H1 (cell line): ENCODE measurements at regions of chr5 and their contacts with region 1.

Region 1: GRCh38 chr5:141512390-141512910 is 23.6 kb downstream of the PCDHGC5 start:
- DNase-seq: peak; percentile 93 to 99
- H3K4me3 ChIP-seq: peak overlapping the region; percentile 61 to 83 (median 76)
- H3K27ac ChIP-seq: no peak overlapping the region
- H3K4me1 ChIP-seq: peaks cover 7 to 35% (median 19%) of the 10 kb centered on the region in 4 experiments
- H3K27me3 ChIP-seq: no peaks in the 10 kb centered on the region
- CTCF ChIP-seq: peak in 2 of 3 experiments; percentile 97 to 98; a peak in 3 of 4 replicates
- EP300 ChIP-seq: no peak; a peak in 1 of 3 replicates
- POLR2A ChIP-seq: peak in 1 of 2 experiments; percentile 60; a peak in 2 of 3 replicates
- RAD21 ChIP-seq: peak; percentile 80 to 86

Region 2: DNA sequence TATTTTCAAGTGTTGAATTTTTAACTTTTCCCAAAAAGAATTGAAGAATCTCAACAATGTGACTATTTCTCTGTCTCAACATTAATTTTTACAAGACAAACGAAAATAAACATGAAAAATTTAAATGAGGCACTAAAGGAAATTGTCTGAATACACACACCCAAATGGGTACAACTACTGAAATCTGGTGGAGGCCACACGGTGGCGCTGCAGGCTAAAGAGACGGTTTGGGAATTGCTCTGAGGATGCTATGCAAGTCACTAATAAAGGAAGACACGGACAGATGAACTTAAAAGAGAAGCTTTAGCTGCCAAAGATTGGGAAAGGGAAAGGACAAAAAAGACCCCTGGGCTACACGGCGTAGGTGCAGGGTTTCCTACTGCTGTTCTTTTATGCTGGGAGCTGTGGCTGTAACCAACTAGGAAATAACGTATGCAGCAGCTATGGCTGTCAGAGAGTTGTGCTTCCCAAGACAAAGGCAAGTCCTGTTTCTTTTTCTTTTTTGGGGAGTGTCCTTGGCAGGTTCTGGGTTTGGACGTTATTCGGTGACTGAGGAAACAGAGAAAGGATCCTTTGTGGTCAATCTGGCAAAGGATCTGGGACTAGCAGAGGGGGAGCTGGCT is 320.2 kb before region 1 on chr5 and contains the start of gene PCDHB10:
- CTCF ChIA-PET with region 1: interaction called, 15 read pairs
- POLR2A ChIA-PET with region 1: no interaction called
- DNase-seq: peak in 1 of 2 experiments; percentile 92
- H3K4me3 ChIP-seq: peak within 1 kb of the TSS; percentile 14 to 46 (median 35); a peak in 6 of 8 replicates
- H3K27ac ChIP-seq: no peak within 1 kb of the TSS
- H3K4me1 ChIP-seq: no peaks in the 10 kb centered on the region; a peak in 1 of 7 replicates
- H3K27me3 ChIP-seq: no peaks in the 10 kb centered on the region
- CTCF ChIP-seq: peak; percentile 72 to 83 (median 83)
- EP300 ChIP-seq: no peak
- POLR2A ChIP-seq: no peak
- RAD21 ChIP-seq: peak; percentile 82 to 84
- total RNA-seq, gene PCDHB10: 1.8 and 1.9 TPM in 2 replicates

Region 3: GRCh38 chr5:141369994-141370848 is 142.2 kb before region 1 on chr5 and contains the start of gene PCDHGB3:
- CTCF ChIA-PET with region 1: interaction called, 12 read pairs
- POLR2A ChIA-PET with region 1: no interaction called
- DNase-seq: no peak
- H3K4me3 ChIP-seq: no peak within 1 kb of the TSS
- H3K27ac ChIP-seq: no peak within 1 kb of the TSS
- H3K4me1 ChIP-seq: no peaks in the 10 kb centered on the region
- H3K27me3 ChIP-seq: no peaks in the 10 kb centered on the region
- CTCF ChIP-seq: peak; percentile 14 to 28 (median 24); a peak in 3 of 4 replicates
- EP300 ChIP-seq: no peak
- POLR2A ChIP-seq: no peak
- RAD21 ChIP-seq: peak; percentile 43 to 50; a peak in 3 of 4 replicates
- total RNA-seq, gene PCDHGB3: 1.3 and 1.6 TPM in 2 replicates

Region 4: DNA sequence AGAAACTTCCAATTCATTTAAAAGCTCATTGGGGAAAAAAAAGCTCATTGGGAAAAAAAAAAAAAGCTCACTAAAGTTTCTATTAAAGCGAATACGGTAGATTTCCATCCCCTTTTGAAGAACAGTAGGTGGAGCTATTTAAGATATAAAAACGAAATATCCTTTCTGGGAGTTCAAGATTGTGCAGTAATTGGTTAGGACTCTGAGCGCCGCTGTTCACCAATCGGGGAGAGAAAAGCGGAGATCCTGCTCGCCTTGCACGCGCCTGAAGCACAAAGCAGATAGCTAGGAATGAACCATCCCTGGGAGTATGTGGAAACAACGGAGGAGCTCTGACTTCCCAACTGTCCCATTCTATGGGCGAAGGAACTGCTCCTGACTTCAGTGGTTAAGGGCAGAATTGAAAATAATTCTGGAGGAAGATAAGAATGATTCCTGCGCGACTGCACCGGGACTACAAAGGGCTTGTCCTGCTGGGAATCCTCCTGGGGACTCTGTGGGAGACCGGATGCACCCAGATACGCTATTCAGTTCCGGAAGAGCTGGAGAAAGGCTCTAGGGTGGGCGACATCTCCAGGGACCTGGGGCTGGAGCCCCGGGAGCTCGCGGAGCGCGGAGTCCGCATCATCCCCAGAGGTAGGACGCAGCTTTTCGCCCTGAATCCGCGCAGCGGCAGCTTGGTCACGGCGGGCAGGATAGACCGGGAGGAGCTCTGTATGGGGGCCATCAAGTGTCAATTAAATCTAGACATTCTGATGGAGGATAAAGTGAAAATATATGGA is 81.9 kb before region 1 on chr5 and contains the start of gene PCDHGA12:
- CTCF ChIA-PET with region 1: interaction called, 16 read pairs
- POLR2A ChIA-PET with region 1: interaction called, 5 read pairs
- DNase-seq: no peak
- H3K4me3 ChIP-seq: no peak within 1 kb of the TSS
- H3K27ac ChIP-seq: no peak within 1 kb of the TSS
- H3K4me1 ChIP-seq: no peaks in the 10 kb centered on the region
- H3K27me3 ChIP-seq: no peaks in the 10 kb centered on the region
- CTCF ChIP-seq: no peak; a peak in 1 of 4 replicates
- EP300 ChIP-seq: no peak
- POLR2A ChIP-seq: no peak
- RAD21 ChIP-seq: peak; percentile 18 to 36; a peak in 3 of 4 replicates
- total RNA-seq, gene PCDHGA12: 1.0 and 1.3 TPM in 2 replicates

Region 5: GRCh38 chr5:141484641-141485311 is 27.7 kb before region 1 on chr5 and contains the start of gene PCDHGC4:
- CTCF ChIA-PET with region 1: interaction called, 310 read pairs
- POLR2A ChIA-PET with region 1: interaction called, 7 read pairs
- DNase-seq: peak in 1 of 2 experiments; percentile 84
- H3K4me3 ChIP-seq: peak within 1 kb of the TSS; percentile 56 to 78 (median 69)
- H3K27ac ChIP-seq: peak within 1 kb of the TSS; percentile 5; the same call in 1 of the 2 replicates
- H3K4me1 ChIP-seq: peaks cover 5 to 20% (median 12%) of the 10 kb centered on the region in 4 experiments
- H3K27me3 ChIP-seq: peaks cover 7 to 19% (median 16%) of the 10 kb centered on the region in 4 experiments
- CTCF ChIP-seq: peak in 1 of 3 experiments; percentile 5; a peak in 1 of 4 replicates
- EP300 ChIP-seq: no peak
- POLR2A ChIP-seq: peak in 1 of 2 experiments; percentile 57; a peak in 1 of 3 replicates
- RAD21 ChIP-seq: peak in 1 of 2 experiments; percentile 10; a peak in 1 of 4 replicates
- total RNA-seq, gene PCDHGC4: 2.4 and 2.6 TPM in 2 replicates

Region 6: DNA sequence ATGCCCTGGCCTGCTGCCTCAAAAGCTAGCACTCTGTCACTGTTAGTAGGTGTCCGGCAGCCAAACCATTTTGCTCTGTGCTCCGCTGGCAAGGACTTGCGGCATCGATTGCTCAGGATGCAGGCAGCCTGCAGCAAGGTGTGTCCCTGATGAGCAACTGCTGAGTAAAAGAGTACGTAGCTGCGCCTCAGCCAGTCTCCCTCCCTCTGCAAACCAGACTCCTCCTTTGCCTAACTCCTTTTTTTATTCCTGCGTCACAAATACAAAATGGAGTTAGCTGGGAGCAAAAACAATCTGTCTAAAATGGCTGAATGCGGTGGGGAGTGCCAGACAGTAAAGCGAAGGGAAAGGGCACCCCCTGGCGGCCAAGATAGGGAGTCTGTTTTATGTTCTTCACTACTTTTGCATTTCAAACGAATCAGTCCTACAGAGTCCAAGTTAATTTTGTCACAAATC is 45.3 kb after region 1 on chr5:
- CTCF ChIA-PET with region 1: interaction called, 74 read pairs
- POLR2A ChIA-PET with region 1: interaction called, 7 read pairs
- DNase-seq: peak; percentile 82 to 89
- H3K4me3 ChIP-seq: peak overlapping the region in 1 of 4 experiments; percentile 25; a peak in 2 of 8 replicates
- H3K27ac ChIP-seq: peak overlapping the region; percentile 90
- H3K4me1 ChIP-seq: peaks cover 3 to 18% (median 6%) of the 10 kb centered on the region in 4 experiments; a peak in 6 of 7 replicates
- H3K27me3 ChIP-seq: no peaks in the 10 kb centered on the region
- CTCF ChIP-seq: peak; percentile 65 to 85 (median 81)
- EP300 ChIP-seq: peak in 1 of 2 experiments; percentile 54; a peak in 1 of 3 replicates
- POLR2A ChIP-seq: peak; percentile 44 to 60
- RAD21 ChIP-seq: peak; percentile 84 to 87

Region 7: GRCh38 chr5:141747152-141748141 is 235.0 kb after region 1 on chr5:
- CTCF ChIA-PET with region 1: no interaction called
- POLR2A ChIA-PET with region 1: no interaction called
- DNase-seq: peak; percentile 50 to 80
- H3K4me3 ChIP-seq: no peak overlapping the region; a peak in 1 of 8 replicates
- H3K27ac ChIP-seq: no peak overlapping the region
- H3K4me1 ChIP-seq: peaks cover 0 to 9% (median 5%) of the 10 kb centered on the region in 4 experiments; a peak in 5 of 7 replicates
- H3K27me3 ChIP-seq: peaks cover 4 to 10% (median 4%) of the 10 kb centered on the region in 4 experiments
- CTCF ChIP-seq: no peak
- EP300 ChIP-seq: no peak
- POLR2A ChIP-seq: no peak
- RAD21 ChIP-seq: no peak